Posterior vena cava (tissue), 2 donors: ENCODE measurements at regions of chr11 and their contacts with region 1.

Region 1: DNA sequence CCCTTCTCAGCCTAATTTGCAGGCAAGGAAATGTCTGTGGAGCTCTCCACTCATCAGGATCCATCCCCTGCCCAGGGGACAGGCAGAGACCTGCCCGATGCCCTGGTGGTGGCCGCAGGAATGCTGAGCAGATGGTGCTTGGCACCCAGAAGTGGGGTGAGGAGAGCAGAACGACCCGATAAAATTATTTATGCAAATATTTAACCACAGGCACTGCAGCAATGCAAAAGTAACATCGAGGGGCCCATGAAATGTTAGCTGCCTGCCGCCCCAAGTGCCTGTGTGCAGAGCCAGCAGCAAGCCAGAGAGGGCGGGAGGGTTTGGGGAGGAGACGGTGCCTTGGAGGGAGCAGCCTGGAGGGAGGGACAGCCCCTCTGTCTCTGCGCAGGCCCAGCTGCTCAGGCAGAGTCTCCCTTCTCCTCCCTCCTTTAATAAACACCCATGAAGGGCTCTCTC is 205.5 kb downstream of the CTTN start:
- DNase-seq: no peak

Region 2: GRCh38 chr11:70556884-70557741 is 46.7 kb before region 1 on chr11:
- intact Hi-C with region 1: no loop called
- DNase-seq: peak; percentile 71

Region 3: GRCh38 chr11:70579341-70579955 is 24.3 kb before region 1 on chr11:
- intact Hi-C with region 1: loop called in 1 of 2 experiments (anchors 1 kb)
- DNase-seq: peak; percentile 69

Region 4: DNA sequence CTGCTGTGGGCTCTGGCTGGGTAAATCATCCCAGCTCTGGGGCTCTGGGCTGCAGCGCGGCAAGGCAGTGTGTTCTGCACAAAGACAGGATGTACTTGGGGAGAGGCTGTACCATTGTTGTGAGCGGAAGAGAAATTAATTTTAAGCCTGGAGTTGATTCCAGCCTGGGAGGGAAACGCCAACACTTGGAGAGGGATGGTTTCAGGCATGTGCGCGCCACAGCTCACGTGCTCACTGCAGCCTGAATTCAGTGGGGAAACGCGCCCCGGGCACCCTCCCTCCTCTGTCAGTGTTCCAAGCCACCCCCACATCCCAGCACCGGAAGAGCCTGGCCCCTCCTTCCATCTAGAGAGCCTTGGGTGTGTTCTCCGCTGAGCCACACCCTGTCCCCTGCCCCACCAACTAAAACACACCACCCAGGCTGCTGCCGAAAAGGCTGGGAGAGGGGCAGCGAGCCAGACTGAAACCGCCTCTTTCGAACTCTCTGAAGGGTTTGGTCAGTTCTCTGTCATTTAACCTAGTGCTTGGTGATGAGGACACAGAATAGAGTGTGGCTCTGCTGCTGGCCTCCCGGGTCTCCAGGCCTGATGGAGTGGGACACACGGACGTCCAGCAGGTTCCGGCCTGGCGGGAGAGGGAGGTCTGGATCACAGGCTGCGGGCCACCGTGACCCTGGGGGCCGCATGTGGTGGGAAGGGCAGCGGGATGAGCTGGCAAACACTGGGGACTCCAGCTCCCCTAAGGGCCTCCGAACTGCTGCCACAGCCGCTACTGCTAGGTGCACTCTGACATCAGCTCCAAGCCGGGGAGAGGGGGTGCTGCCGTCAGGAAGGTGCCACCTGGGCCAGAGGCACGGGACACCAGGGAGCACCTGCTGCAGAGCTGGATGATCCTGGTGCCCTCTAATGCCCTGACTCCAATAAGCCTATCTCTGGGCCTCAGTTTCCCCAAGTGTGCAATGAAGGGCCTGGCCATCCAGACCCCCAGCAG is 25.4 kb after region 1 on chr11:
- intact Hi-C with region 1: no loop called
- DNase-seq: no peak